Psoas muscle (tissue), 8 donors: ENCODE measurements at regions of chr1 and their contacts with region 1.

Region 1: DNA sequence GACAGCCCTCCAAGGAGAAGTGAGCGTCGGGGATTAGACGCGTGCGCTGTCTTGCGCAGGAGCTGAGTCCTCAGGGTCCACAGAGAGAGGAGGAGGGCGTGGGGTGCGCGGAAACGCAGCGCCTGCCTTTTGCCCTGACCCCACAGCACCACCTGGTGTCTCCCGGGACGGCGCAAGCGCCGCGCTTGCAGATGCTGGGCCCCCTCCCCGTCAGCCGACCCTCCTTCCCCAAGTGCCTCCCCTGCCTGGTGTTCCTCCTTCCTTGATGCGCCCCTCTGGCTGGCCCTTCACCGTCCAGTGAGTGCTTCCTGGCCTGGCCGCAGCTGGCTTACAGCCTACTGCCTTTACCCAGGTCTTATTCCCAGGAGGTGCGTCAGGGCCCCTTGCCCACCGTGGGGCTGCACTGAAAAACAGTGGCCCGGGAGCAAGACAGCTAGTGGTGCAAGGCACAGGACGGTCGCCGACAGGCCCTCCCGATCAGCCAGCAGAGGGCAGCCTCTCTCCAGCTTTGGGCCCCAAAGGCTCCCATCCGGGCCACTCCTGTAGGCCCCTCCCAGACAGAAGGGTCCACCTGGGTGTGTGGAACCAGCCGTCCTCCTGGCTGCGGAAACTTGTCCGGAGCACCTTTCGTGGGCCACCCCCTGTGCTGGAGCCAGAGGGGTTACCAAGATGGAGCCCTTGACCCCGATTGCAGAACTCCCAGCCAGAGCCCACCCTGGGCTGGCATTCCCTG is 12.9 kb upstream of the PHLDA3 start:
- DNase-seq: peak; percentile 87 to 92
- ATAC-seq: peak; percentile 67 to 77 (median 74)
- H3K4me3 ChIP-seq: peak overlapping the region; percentile 51
- H3K27ac ChIP-seq: peak overlapping the region; percentile 83
- H3K4me1 ChIP-seq: peaks cover 23% of the 10 kb centered on the region
- H3K27me3 ChIP-seq: no peaks in the 10 kb centered on the region
- CTCF ChIP-seq: peak; percentile 82

Region 2: GRCh38 chr1:201329286-201329685 is 152.6 kb before region 1 on chr1:
- intact Hi-C with region 1: no loop called
- DNase-seq: no peak
- ATAC-seq: peak; percentile 17 to 80 (median 69)
- H3K4me3 ChIP-seq: no peak overlapping the region
- H3K27ac ChIP-seq: no peak overlapping the region
- H3K4me1 ChIP-seq: peaks cover 6% of the 10 kb centered on the region
- H3K27me3 ChIP-seq: no peaks in the 10 kb centered on the region
- CTCF ChIP-seq: no peak

Region 3: DNA sequence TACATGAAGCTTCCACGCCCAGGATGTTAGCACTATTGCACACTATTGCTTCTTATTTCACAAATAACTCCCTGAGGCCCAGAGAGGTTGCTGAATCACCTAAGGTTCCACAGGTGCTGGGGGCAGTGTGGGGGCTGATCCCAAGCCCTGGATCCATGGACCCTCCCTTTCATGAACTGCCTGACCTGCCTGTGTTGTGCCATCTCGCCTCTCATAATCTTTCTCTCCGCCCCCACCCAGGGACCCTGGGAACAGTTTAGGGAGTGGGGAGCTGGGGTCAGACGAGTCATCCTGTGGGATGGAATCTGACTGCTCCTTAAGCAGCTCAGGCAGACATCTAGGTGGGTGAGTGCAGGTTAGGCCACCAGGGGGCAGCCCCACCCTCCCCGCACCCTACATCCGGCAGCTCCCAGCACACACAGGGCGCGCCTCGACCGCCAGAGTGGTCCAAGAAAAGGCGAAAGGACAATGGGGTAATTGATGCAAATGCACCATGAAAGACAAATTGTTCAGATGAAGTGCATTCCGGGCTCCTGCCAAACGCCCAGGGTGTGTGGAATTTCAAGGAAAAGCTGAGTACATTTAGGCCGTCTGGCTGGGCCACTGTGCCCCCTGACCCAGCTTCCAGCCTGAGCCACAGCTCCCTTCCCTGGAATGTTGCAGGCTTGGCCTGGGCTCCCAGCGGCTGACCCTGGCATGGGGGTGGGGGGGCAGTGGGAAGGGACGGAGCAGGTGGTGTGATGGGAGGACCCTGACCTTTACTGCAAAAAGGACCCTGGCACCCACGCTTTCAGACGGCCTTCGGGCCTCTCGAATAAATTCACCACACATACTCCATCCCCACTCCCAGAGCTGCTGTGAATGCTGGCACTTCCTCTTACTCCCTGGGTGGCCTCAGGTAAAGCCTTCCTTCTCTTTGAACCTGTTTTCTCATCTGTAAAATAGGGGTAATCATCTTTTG is 33.7 kb before region 1 on chr1:
- intact Hi-C with region 1: loop called (anchors 2 to 5 kb)
- DNase-seq: peak; percentile 82 to 90
- ATAC-seq: peak; percentile 93 to 98 (median 96)
- H3K4me3 ChIP-seq: no peak overlapping the region
- H3K27ac ChIP-seq: peak overlapping the region; percentile 46
- H3K4me1 ChIP-seq: peaks cover 21% of the 10 kb centered on the region
- H3K27me3 ChIP-seq: no peaks in the 10 kb centered on the region
- CTCF ChIP-seq: peak; percentile 88

Region 4: DNA sequence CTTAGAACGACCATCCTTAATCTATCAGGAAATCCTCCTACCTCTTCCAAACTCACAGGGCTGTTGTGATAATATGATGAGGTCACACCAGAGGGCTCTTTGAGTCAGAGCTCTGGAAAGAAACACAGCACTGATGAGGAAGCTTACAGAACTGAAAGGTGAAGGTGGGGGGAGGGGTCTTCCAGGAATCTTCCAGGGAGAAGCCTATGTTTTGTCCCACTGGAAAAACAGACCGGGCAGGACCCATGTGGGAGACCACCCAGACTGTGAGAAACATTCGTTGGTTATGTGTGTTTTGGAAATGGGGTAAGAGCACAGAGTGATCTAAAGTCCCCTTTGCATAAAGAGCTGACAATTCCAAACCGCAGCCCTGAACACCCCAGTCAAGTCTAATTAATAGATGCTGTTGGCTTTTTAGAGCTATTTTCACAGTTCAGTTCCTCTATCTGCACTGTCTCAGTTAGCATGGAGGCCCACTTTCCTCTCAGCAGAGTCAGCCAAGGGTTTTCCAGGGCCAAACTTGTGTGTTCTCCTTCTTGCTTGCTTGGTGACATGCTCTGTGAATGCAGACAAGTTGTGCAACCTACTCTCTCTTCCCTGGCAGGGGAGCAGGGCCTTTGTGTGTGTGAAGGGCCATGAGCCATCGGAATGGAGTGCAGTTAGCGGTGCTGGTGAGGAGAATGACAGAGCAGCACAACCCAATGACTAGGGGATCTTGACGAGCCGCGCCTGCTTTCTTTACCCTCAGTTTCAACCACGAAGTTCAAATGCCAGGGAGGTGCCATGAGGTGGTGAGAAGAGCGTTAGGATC is 25.2 kb before region 1 on chr1:
- intact Hi-C with region 1: loop called in 1 of 2 experiments (anchors 2 kb)
- DNase-seq: peak; percentile 85 to 88
- ATAC-seq: peak; percentile 69 to 78 (median 76)
- H3K4me3 ChIP-seq: peak overlapping the region; percentile 21
- H3K27ac ChIP-seq: peak overlapping the region; percentile 95
- H3K4me1 ChIP-seq: peaks cover 53% of the 10 kb centered on the region
- H3K27me3 ChIP-seq: peaks cover 0 to 1% (median 0%) of the 10 kb centered on the region in 3 donors
- CTCF ChIP-seq: no peak

Region 5: GRCh38 chr1:201511941-201512539 is 30.1 kb after region 1 on chr1:
- intact Hi-C with region 1: loop called (anchors 1 to 2 kb)
- DNase-seq: peak; percentile 63 to 77
- ATAC-seq: peak; percentile 41 to 59 (median 52)
- H3K4me3 ChIP-seq: no peak overlapping the region
- H3K27ac ChIP-seq: peak overlapping the region; percentile 60
- H3K4me1 ChIP-seq: peaks cover 12% of the 10 kb centered on the region
- H3K27me3 ChIP-seq: no peaks in the 10 kb centered on the region
- CTCF ChIP-seq: no peak